Activated CD8-positive, alpha-beta memory T cell treated with anti-CD3 and anti-CD28 coated beads, Interleukin-2, amount 10 ng/mL, durations not matched to agents 7 days and 5 days (primary cell): ENCODE measurements at regions of chr4 and their contacts with region 1.

Region 1: DNA sequence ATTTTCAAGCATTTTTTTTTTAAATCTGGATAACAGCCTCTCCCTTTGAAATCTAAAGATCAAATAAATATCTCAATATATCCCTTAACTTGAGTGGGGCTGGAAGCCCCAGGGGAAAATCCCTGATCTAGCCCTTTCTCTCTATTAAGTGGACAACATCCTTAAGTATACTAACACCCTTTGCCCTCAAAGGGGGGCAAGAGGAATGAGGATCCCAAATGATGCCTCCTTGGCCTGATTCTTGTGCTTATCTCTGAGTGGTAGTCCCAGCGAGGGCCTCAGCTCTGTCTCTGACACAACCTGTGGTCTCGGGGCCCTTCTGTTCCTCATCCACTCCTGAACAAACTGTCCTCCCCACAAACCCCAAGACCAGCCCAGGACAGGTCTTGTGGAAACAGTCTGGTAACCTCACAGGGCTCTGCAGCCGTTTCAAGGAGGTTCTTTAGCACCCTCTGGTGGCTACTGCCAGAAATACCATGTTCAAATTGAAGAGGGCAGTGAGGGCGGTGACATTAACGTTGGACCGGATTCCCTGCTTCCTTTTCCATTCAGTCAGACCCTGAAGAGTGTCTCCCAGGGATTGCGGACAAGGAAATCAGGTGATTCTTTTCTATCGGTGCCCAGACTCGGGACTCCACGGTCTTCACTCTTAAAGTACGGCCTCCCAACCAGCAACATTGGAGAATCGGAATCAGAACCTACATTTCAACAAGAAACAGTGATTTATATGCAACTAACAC is 12.9 kb downstream of the CXCL13 start:
- DNase-seq: peak; percentile 78
- ATAC-seq: peak; percentile 91
- H3K4me3 Mint-ChIP-seq: no peak overlapping the region
- H3K27ac Mint-ChIP-seq: no peak overlapping the region
- H3K4me1 Mint-ChIP-seq: peaks cover 13% of the 10 kb centered on the region
- H3K27me3 Mint-ChIP-seq: peaks cover 37% of the 10 kb centered on the region

Region 2: GRCh38 chr4:77220828-77221613 is 397.5 kb before region 1 on chr4:
- CTCF ChIA-PET with region 1: no interaction called
- DNase-seq: no peak
- ATAC-seq: no peak
- H3K4me3 Mint-ChIP-seq: no peak overlapping the region
- H3K27ac Mint-ChIP-seq: no peak overlapping the region
- H3K4me1 Mint-ChIP-seq: no peaks in the 10 kb centered on the region
- H3K27me3 Mint-ChIP-seq: peaks cover 22% of the 10 kb centered on the region

Region 3: DNA sequence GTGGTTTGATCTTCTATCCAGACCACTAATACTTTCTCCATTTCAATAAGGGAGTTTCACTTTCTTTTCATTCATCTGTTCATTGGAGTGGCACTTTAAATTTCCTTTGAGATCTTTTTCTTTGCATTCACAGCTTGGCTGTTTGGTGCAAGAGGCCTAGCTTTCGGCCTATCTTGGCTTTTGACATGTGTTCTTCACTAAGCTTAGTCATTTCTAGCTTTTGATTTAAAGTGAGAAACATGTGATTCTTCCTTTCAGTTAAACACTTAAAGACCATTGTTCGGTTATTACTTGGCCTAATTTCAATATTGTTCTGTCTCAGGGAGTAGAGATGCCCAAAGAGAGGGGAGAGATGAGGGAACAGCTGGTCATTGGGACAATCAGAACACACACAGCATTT is 11.3 kb after region 1 on chr4:
- CTCF ChIA-PET with region 1: interaction called, 18 read pairs
- DNase-seq: no peak
- ATAC-seq: peak; percentile 74
- H3K4me3 Mint-ChIP-seq: no peak overlapping the region
- H3K27ac Mint-ChIP-seq: peak overlapping the region; percentile 57
- H3K4me1 Mint-ChIP-seq: peaks cover 17% of the 10 kb centered on the region
- H3K27me3 Mint-ChIP-seq: no peaks in the 10 kb centered on the region